Aorta (tissue), 5 donors: ENCODE measurements at regions of chr3 and their contacts with region 1.

Region 1: GRCh38 chr3:36494461-36495109 is 114.3 kb downstream of the STAC start:
- DNase-seq: peak in 1 of 2 donors; percentile 54
- ATAC-seq: peak; percentile 83
- H3K4me3 ChIP-seq: no peak overlapping the region
- H3K27ac ChIP-seq: peak overlapping the region in 1 of 2 donors; percentile 19
- H3K4me1 ChIP-seq: peaks cover 0 to 6% of the 10 kb centered on the region in 2 donors
- H3K27me3 ChIP-seq: no peaks in the 10 kb centered on the region

Region 2: DNA sequence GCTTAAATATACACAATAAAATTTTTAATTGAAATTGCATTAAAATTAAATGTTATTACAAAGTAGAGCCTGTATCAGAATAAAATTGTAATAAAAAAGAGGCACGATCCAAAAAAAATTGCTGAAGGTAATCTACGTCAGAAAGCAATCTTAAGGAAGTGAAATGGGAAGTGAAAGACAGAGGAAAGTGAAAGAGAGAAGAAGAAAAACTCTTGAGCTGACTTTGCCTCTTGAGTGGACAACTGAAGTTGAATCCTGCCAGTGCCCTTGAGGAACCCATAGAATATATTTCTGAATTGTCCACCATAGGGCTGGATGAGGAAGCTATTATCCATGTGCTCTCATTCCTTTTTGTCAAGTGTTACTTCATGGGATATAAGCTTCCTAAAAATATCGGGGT is 399.3 kb before region 1 on chr3:
- intact Hi-C with region 1: no loop called
- DNase-seq: no peak
- ATAC-seq: no peak
- H3K4me3 ChIP-seq: no peak overlapping the region
- H3K27ac ChIP-seq: no peak overlapping the region
- H3K4me1 ChIP-seq: peaks cover 0 to 2% of the 10 kb centered on the region in 2 donors
- H3K27me3 ChIP-seq: no peaks in the 10 kb centered on the region

Region 3: DNA sequence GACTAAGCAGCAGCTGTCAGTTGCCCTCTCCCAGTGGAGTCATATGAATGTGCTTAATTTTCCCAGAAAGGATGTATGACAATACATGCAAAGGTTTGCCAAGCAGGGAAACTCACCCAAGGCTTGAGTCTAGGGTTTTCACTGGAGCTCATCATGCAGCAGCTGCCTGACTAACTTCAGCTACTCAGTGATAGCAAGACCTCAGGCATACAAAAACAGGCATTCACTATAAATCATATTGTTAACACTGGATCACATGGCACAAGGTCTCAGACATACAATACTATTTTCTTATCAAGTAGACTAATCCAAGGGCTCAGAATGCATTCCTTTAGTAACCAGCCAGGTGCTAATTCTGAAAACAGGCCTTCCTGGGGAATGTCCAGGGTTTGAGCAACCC is 199.3 kb before region 1 on chr3:
- intact Hi-C with region 1: loop called in 1 of 2 experiments (anchors 5 kb)
- DNase-seq: no peak
- ATAC-seq: no peak
- H3K4me3 ChIP-seq: no peak overlapping the region
- H3K27ac ChIP-seq: no peak overlapping the region
- H3K4me1 ChIP-seq: peaks cover 0 to 7% of the 10 kb centered on the region in 2 donors
- H3K27me3 ChIP-seq: no peaks in the 10 kb centered on the region

Region 4: GRCh38 chr3:37504583-37505357 is 1010.2 kb after region 1 on chr3:
- intact Hi-C with region 1: no loop called
- DNase-seq: no peak
- ATAC-seq: no peak
- H3K4me3 ChIP-seq: no peak overlapping the region
- H3K27ac ChIP-seq: no peak overlapping the region
- H3K4me1 ChIP-seq: peaks cover 9% of the 10 kb centered on the region in 2 donors
- H3K27me3 ChIP-seq: no peaks in the 10 kb centered on the region